ENCODE measurements at regions of chr17 and their contacts with region 1.

Region 1: DNA sequence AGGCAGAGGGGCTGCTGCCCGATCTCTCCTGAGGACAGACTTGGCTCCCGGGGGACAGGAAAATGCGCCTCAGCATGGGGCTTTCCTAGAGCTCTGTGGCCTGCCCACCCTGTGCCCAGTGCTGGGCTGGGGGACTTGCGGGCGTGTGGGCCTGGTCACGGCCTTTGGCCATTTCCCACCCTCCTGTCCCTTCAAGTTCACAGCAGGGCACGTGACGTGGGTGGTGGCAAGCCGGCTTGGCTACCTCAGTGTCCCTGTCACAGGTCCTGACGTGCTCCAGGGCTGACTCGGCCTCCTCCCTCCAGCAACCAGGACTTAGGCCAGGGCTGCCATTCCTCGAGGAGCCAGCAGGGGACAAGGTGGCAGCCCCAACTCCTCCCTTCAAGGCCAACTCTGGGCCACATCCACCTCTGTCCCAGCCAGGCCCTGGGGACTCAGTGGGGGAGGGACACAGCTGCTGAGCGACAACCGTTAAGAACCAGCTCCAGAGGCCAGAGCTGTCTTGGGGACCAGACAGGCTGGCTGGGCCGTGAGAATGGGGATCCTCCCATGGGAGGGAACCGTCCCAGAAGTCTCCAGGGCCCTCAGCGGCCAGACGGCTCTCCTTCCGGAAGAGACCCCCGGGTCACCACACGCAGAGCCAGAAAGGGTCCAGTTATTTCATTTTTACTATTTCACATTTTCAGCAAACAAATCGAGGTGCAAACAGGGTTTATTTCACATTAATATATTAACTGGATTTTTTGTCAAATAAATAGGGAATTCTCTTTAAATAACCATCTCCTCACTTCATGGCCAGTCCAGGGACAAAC is 1.1 kb upstream of the UNC13D start:
- DNase-seq: peak in 4 of 5 donors; percentile 37 to 70 (median 42)
- H3K4me3 ChIP-seq: no peak overlapping the region
- H3K4me3 Mint-ChIP-seq: peak overlapping the region; percentile 16 to 84 (median 46)
- H3K27ac ChIP-seq: peak overlapping the region; percentile 89
- H3K27ac Mint-ChIP-seq: peak overlapping the region; percentile 30 to 89 (median 66)
- H3K4me1 ChIP-seq: peaks cover 36% of the 10 kb centered on the region
- H3K4me1 Mint-ChIP-seq: peaks cover 16 to 36% (median 17%) of the 10 kb centered on the region in 3 donors
- H3K27me3 ChIP-seq: no peaks in the 10 kb centered on the region
- H3K27me3 Mint-ChIP-seq: no peaks in the 10 kb centered on the region

Region 2: DNA sequence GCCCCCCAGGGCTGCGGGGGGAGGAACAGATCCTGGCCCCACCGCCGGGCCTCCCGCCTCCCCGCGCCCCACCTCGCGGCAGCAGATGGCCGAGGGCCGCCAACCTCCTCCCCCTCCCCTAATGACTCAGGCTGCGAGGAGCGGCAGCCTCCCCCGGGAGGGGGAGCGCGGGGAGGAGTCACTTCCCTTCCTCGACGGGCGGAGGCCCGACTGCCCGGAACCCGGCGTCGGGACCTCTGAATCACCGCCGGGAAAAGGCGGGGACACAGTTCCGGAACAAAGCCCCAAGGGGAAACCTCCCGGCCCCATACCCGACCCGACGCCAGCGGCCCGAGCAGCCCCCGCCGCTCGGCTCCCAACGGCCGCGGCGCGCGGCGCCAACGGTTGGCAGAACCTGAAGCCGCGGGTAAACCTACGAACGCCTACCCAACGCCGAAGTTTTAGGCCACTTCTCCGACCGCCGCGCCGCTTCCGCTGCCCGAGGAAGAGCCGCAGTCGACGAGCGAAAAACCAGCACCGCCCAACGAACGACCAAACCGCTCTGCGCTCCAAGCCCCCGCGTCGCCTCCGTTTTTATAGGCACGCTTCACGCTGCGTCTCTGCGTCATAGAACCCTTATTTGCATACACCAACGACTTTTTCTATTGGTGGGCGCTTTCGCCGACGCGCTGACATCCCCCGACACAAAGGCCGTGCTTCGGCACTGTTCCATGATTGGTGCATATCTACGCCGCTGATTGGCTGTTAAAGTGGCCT is 65.8 kb before region 1 on chr17:
- CTCF ChIA-PET with region 1: interaction called, 9 read pairs
- POLR2A ChIA-PET with region 1: interaction called, 13 read pairs
- DNase-seq: peak; percentile 84 to 98 (median 95)
- H3K4me3 ChIP-seq: peak overlapping the region; percentile 86
- H3K4me3 Mint-ChIP-seq: peak overlapping the region; percentile 93 to 100 (median 98)
- H3K27ac ChIP-seq: peak overlapping the region; percentile 97
- H3K27ac Mint-ChIP-seq: peak overlapping the region; percentile 93 to 100 (median 98)
- H3K4me1 ChIP-seq: peaks cover 40% of the 10 kb centered on the region
- H3K4me1 Mint-ChIP-seq: peaks cover 51 to 69% (median 59%) of the 10 kb centered on the region in 3 donors
- H3K27me3 ChIP-seq: no peaks in the 10 kb centered on the region
- H3K27me3 Mint-ChIP-seq: peaks cover 0 to 16% of the 10 kb centered on the region in 2 donors

Region 3: GRCh38 chr17:75827252-75828115 is 17.8 kb before region 1 on chr17:
- CTCF ChIA-PET with region 1: interaction called, 13 read pairs
- POLR2A ChIA-PET with region 1: interaction called, 18 read pairs
- DNase-seq: peak; percentile 58 to 83 (median 72)
- H3K4me3 ChIP-seq: peak overlapping the region; percentile 26
- H3K4me3 Mint-ChIP-seq: peak overlapping the region; percentile 62 to 85 (median 65)
- H3K27ac ChIP-seq: peak overlapping the region; percentile 57
- H3K27ac Mint-ChIP-seq: peak overlapping the region; percentile 61 to 100 (median 94)
- H3K4me1 ChIP-seq: peaks cover 17% of the 10 kb centered on the region
- H3K4me1 Mint-ChIP-seq: peaks cover 15 to 22% (median 19%) of the 10 kb centered on the region in 3 donors
- H3K27me3 ChIP-seq: no peaks in the 10 kb centered on the region
- H3K27me3 Mint-ChIP-seq: no peaks in the 10 kb centered on the region

Region 4: GRCh38 chr17:75877752-75878173 is 32.5 kb after region 1 on chr17:
- CTCF ChIA-PET with region 1: interaction called, 12 read pairs
- POLR2A ChIA-PET with region 1: interaction called, 9 read pairs
- DNase-seq: peak; percentile 49 to 79 (median 67)
- H3K4me3 ChIP-seq: peak overlapping the region; percentile 61
- H3K4me3 Mint-ChIP-seq: peak overlapping the region; percentile 83 to 90 (median 86)
- H3K27ac ChIP-seq: peak overlapping the region; percentile 43
- H3K27ac Mint-ChIP-seq: peak overlapping the region; percentile 76 to 96 (median 87)
- H3K4me1 ChIP-seq: peaks cover 40% of the 10 kb centered on the region
- H3K4me1 Mint-ChIP-seq: peaks cover 35 to 59% (median 39%) of the 10 kb centered on the region in 3 donors
- H3K27me3 ChIP-seq: no peaks in the 10 kb centered on the region
- H3K27me3 Mint-ChIP-seq: peaks cover 0 to 5% of the 10 kb centered on the region in 2 donors